Activated CD8-positive, alpha-beta memory T cell treated with anti-CD3 and anti-CD28 coated beads, Interleukin-2, amount 10 ng/mL, durations not matched to agents 7 days and 5 days (primary cell): ENCODE measurements at regions of chr10 and their contacts with region 1.

Region 1: GRCh38 chr10:101141616-101142532 is 10.8 kb downstream of the TLX1 start:
- DNase-seq: peak; percentile 84
- ATAC-seq: peak; percentile 93
- H3K4me3 Mint-ChIP-seq: no peak overlapping the region
- H3K27ac Mint-ChIP-seq: no peak overlapping the region
- H3K4me1 Mint-ChIP-seq: peaks cover 10% of the 10 kb centered on the region
- H3K27me3 Mint-ChIP-seq: peaks cover 96% of the 10 kb centered on the region

Region 2: GRCh38 chr10:100939763-100940344 is 202.0 kb before region 1 on chr10:
- CTCF ChIA-PET with region 1: no interaction called
- DNase-seq: no peak
- ATAC-seq: no peak
- H3K4me3 Mint-ChIP-seq: no peak overlapping the region
- H3K27ac Mint-ChIP-seq: no peak overlapping the region
- H3K4me1 Mint-ChIP-seq: peaks cover 13% of the 10 kb centered on the region
- H3K27me3 Mint-ChIP-seq: no peaks in the 10 kb centered on the region

Region 3: GRCh38 chr10:101031128-101031795 is 110.6 kb before region 1 on chr10 and contains the starts of genes PDZD7 and SFXN3:
- CTCF ChIA-PET with region 1: interaction called, 12 read pairs
- DNase-seq: peak; percentile 97
- ATAC-seq: peak; percentile 89
- H3K4me3 Mint-ChIP-seq: peak within 1 kb of the TSS; percentile 85
- H3K27ac Mint-ChIP-seq: peak within 1 kb of the TSS; percentile 91
- H3K4me1 Mint-ChIP-seq: peaks cover 15% of the 10 kb centered on the region
- H3K27me3 Mint-ChIP-seq: peaks cover 18% of the 10 kb centered on the region
- total RNA-seq, gene PDZD7: 0.59 to 1.2 TPM
- total RNA-seq, gene SFXN3: 38.2 to 48.8 TPM

Region 4: DNA sequence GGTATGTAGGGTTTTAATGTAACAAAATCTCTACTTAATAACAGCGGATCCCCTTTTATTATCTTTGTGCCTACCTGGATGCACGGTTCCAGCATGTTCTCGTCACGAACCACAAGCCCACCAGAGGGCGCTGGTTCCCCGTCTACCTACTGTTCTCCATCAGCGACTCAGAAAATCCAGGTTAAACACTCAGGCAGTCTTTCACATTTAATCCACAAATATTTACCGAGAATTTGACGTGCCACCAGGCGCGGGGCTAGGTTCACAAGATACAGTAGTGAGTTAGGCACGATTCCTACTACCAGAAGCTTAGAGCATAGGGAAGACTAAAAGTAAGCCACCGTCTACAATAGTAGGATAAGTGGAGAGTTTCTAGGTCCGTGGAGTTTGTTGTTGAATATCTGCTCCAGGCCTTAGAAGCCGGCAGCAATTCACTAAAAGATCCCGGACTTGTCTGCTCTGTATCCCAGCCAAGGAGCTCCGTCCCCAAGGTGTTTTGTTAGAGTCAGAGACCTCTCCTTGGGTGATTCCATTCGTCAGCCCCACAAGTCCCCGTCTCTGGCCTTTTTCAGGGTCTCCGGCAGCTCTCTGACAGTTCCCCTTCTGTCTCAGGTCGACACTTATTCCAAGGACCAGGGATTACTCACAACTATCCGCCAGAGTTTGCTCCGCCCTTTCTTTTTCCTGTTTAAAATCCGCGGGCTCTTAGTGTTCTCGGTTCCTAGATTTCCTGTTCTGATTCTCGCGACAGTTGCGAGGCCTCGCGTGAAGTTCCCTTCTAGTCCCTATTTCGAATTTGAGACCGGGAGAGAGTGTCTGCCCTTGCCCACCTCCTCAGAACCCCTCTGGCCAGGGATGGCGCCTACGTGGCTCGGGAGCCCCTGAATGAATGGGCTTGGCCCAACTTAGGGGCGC is 81.6 kb before region 1 on chr10:
- CTCF ChIA-PET with region 1: interaction called, 22 read pairs
- DNase-seq: peak; percentile 93
- ATAC-seq: peak; percentile 71
- H3K4me3 Mint-ChIP-seq: peak overlapping the region; percentile 86
- H3K27ac Mint-ChIP-seq: peak overlapping the region; percentile 90
- H3K4me1 Mint-ChIP-seq: peaks cover 43% of the 10 kb centered on the region
- H3K27me3 Mint-ChIP-seq: peaks cover 31% of the 10 kb centered on the region

Region 5: DNA sequence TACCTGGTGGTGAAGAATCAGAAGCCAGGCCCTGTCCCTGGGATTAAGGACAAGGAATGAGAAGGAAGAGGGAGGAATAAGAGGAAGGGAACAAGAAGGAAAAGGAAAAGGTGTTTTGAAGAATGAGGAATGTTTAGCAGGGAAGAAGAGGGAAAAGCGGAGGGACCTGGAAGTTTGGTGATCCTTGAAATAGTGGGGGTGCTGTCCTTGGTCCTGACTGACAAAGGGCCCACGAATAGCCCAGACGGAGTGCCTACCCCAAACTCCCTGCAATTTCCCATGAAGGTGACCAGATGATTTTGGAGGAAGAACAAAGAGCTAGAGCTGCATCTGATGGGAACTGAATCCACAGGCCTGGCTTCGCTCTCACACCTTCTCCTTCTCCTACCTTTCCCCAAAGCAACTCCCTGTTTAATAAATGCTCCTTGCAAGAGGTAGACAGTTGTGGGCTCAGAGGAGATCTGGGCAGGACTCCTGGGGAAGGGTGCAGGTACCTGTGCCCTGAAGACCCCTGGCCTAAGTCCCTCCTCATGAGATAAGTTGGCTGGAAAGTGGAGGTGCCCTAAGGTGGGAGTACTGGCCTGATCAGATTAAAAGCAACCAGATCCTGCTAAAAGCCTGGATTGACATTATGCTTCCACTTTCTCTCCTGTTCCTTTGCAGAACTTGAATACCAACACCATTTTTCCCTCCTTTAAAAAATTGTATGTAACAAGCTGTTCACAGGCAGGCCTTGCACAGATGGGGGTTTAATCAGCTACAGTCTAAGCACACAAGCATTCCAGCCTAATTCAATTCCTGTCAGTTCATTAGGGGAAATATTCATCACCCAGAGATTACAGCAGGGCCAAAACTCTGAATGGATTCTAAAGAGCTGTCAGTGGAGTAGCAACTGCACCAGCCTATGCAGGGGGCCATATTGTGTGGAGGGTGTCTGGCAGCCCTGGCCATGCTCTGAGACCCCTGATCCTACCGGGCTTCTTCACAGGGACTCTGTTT is 60.6 kb before region 1 on chr10:
- CTCF ChIA-PET with region 1: interaction called, 19 read pairs
- DNase-seq: no peak
- ATAC-seq: no peak
- H3K4me3 Mint-ChIP-seq: no peak overlapping the region
- H3K27ac Mint-ChIP-seq: no peak overlapping the region
- H3K4me1 Mint-ChIP-seq: no peaks in the 10 kb centered on the region
- H3K27me3 Mint-ChIP-seq: peaks cover 51% of the 10 kb centered on the region

Region 6: DNA sequence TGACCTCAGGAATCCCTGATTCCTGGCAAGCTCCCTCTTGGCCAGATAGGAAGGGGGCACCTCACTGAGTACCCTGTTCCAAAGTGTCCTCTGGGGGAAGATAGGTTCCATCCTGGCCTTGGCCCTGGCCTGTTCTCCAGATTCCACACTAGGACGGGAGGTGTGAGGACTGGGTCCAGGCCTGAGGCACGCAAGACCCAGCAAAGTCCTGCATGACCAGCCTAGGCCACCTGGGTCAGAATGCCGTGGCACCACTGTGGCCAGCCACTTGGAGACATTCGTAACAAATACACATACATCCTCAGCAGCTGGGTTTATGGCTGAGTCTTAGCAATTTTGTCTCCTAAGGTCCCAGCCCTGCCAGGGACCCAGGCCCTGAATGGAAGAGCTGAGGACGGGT is 34.1 kb before region 1 on chr10:
- CTCF ChIA-PET with region 1: interaction called, 358 read pairs
- DNase-seq: no peak
- ATAC-seq: no peak
- H3K4me3 Mint-ChIP-seq: no peak overlapping the region
- H3K27ac Mint-ChIP-seq: no peak overlapping the region
- H3K4me1 Mint-ChIP-seq: no peaks in the 10 kb centered on the region
- H3K27me3 Mint-ChIP-seq: peaks cover 39% of the 10 kb centered on the region

Region 7: DNA sequence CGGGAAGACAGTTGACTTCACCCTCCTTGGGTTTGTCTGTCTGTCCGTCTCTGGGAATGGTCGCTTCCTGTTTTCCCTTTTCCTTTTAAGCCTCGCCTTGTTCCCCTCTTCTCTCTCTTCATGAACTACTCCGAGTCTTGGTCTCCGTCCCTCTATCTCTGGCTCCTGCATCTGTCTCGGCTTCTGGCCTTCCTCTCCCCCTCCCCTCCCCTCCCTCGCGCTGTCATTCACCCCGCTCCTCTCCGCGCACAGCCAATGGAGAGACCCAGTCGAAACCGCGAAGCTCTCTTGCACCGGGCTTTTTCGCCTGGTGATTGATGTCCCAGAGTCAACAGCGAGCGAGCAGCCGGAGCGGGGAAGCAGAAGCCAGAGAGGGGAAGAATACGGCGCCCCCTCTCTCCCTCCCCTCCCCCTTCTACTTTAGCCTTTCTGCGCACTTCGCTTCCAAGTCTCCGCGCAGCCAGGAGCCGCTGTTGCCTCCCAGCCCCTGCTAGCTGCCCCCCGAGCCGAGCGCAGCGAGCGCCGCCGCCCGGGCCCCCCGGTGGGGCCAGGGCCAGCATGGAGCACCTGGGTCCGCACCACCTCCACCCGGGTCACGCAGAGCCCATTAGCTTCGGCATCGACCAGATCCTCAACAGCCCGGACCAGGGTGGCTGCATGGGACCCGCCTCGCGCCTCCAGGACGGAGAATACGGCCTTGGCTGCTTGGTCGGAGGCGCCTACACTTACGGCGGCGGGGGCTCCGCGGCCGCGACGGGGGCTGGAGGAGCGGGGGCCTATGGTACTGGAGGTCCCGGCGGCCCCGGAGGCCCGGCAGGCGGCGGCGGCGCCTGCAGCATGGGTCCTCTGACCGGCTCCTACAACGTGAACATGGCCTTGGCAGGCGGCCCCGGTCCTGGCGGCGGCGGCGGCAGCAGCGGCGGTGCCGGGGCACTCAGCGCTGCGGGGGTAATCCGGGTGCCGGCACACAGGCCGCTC is 10.6 kb before region 1 on chr10 and contains the start of gene TLX1:
- CTCF ChIA-PET with region 1: interaction called, 95 read pairs
- DNase-seq: no peak
- ATAC-seq: no peak
- H3K4me3 Mint-ChIP-seq: no peak within 1 kb of the TSS
- H3K27ac Mint-ChIP-seq: no peak within 1 kb of the TSS
- H3K4me1 Mint-ChIP-seq: peaks cover 11% of the 10 kb centered on the region
- H3K27me3 Mint-ChIP-seq: peaks cover 91% of the 10 kb centered on the region
- total RNA-seq, gene TLX1: not detected

Region 8: DNA sequence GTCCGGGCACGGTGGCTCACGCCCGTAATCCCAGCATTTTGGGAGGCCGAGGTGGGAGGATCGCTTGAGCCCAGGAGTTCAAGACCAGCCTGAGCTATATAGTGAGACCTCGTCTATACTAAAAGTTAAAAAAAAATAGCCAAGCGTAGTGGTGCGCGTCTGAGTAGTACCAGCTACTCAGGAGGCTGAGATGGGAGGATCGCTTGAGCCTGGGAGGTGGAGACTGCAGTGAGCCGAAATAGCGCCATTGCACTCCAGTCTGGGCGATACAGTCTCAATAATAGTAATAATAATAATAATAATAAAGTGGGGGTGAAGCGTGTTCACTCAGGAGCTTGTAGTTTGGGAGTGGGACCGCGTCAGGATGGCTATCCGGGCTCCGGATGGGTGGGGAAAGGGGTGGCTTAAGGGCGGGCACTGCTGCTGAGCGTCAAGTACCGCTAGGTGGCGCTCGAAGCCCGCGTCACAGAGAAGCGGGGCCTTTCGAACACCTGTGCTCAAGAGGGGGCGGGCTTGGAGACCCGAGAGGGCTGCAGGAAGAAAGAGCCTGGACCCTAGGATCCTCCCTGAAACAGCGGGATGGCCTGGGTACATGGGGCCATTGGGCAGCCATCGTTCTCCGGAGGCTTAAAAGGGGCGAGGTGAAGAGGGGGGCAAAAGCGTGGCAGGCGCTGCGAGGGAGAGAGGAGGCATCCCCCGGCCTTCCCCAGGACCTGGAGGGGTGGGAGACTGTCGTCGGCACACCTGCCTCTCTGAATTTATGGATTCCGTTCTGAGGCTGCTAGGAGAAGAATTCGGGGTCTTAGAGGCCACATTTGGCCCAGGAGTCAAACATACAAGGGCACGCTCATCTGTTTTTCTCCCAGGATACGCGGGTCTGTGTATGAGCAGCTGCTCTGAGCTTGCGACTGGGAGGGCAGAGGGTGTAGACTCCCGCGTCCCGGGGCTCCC is 72.8 kb after region 1 on chr10:
- CTCF ChIA-PET with region 1: interaction called, 21 read pairs
- DNase-seq: peak; percentile 73
- ATAC-seq: peak; percentile 79
- H3K4me3 Mint-ChIP-seq: no peak overlapping the region
- H3K27ac Mint-ChIP-seq: no peak overlapping the region
- H3K4me1 Mint-ChIP-seq: peaks cover 19% of the 10 kb centered on the region
- H3K27me3 Mint-ChIP-seq: peaks cover 79% of the 10 kb centered on the region

Region 9: GRCh38 chr10:101346177-101346576 is 204.3 kb after region 1 on chr10:
- CTCF ChIA-PET with region 1: no interaction called
- DNase-seq: no peak
- ATAC-seq: no peak
- H3K4me3 Mint-ChIP-seq: no peak overlapping the region
- H3K27ac Mint-ChIP-seq: no peak overlapping the region
- H3K4me1 Mint-ChIP-seq: no peaks in the 10 kb centered on the region
- H3K27me3 Mint-ChIP-seq: peaks cover 14% of the 10 kb centered on the region

Region 10: DNA sequence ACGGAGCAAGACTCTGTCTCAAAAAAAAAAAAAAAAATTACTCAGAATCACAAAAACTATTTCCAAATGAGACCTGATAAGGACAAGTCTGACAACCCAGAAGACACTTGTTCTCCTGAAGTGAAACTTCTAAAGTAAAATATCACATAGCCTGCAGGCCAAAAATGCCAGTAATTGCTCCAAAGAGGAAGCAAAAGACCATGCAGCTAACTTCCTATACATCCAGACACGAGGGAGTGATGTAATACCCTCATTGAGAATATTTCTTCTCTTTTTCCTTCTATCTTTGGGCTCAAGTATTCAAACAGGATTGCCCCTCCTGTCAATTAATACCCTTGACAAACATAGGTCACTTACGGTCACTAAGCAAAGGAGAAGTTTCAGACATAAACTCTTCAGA is 882.9 kb after region 1 on chr10:
- CTCF ChIA-PET with region 1: no interaction called
- DNase-seq: no peak
- ATAC-seq: no peak
- H3K4me3 Mint-ChIP-seq: no peak overlapping the region
- H3K27ac Mint-ChIP-seq: no peak overlapping the region
- H3K4me1 Mint-ChIP-seq: peaks cover 2% of the 10 kb centered on the region
- H3K27me3 Mint-ChIP-seq: no peaks in the 10 kb centered on the region